Caco-2 (cell line): ENCODE measurements at regions of chr5 and their contacts with region 1.

Region 1: DNA sequence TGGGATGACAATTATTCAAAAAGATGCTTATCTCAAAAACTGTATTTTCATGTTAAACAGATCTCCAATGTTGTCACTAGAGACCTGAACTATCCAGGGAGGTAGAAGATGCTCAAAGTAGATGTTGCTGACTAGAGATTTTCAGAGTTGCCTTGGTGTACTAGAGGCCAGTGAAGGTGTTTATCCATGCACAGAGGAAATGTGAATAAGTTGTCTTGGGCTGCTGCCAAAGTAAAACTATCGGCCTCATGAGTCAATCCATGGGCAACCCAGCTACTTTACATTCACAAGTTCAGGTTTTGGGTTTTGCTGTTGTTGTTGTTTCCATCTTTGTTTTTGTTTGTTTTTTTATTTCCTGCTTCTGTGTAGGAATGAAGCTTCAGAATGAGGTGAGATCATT is 141.1 kb upstream of the RANBP3L start:
- DNase-seq: no peak
- H3K4me3 ChIP-seq: no peak overlapping the region
- H3K4me3 Mint-ChIP-seq: peak overlapping the region; percentile 10
- H3K27ac Mint-ChIP-seq: peak overlapping the region; percentile 75
- H3K4me1 ChIP-seq: peaks cover 54% of the 10 kb centered on the region
- H3K4me1 Mint-ChIP-seq: peaks cover 36% of the 10 kb centered on the region
- H3K27me3 ChIP-seq: no peaks in the 10 kb centered on the region
- H3K27me3 Mint-ChIP-seq: no peaks in the 10 kb centered on the region
- CTCF ChIP-seq: no peak

Region 2: DNA sequence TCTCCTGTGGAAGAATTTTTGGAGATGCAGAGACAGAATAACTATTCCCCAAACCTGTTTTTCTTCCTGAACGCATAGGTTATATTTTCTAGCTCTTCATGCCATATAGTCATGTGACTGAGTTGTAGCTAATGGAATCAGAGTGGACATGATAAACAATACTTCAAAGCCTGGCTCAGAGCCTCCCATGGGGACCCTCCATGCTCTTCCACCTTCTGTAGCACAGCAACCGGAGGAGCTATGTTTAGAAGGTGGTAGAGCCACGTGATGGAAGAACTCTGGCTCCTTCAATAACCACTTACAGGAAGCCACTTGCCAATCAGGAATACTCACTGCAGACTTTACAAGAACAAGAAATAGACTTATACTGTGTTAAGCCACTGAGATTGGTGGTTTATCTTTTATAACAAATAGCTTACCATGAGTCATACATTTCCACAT is 240.3 kb before region 1 on chr5:
- CTCF ChIA-PET with region 1: no interaction called
- POLR2A ChIA-PET with region 1: no interaction called
- intact Hi-C with region 1: no loop called
- DNase-seq: no peak
- H3K4me3 ChIP-seq: no peak overlapping the region
- H3K4me3 Mint-ChIP-seq: no peak overlapping the region
- H3K27ac Mint-ChIP-seq: no peak overlapping the region
- H3K4me1 ChIP-seq: no peaks in the 10 kb centered on the region
- H3K4me1 Mint-ChIP-seq: no peaks in the 10 kb centered on the region
- H3K27me3 ChIP-seq: no peaks in the 10 kb centered on the region
- H3K27me3 Mint-ChIP-seq: no peaks in the 10 kb centered on the region
- CTCF ChIP-seq: no peak

Region 3: DNA sequence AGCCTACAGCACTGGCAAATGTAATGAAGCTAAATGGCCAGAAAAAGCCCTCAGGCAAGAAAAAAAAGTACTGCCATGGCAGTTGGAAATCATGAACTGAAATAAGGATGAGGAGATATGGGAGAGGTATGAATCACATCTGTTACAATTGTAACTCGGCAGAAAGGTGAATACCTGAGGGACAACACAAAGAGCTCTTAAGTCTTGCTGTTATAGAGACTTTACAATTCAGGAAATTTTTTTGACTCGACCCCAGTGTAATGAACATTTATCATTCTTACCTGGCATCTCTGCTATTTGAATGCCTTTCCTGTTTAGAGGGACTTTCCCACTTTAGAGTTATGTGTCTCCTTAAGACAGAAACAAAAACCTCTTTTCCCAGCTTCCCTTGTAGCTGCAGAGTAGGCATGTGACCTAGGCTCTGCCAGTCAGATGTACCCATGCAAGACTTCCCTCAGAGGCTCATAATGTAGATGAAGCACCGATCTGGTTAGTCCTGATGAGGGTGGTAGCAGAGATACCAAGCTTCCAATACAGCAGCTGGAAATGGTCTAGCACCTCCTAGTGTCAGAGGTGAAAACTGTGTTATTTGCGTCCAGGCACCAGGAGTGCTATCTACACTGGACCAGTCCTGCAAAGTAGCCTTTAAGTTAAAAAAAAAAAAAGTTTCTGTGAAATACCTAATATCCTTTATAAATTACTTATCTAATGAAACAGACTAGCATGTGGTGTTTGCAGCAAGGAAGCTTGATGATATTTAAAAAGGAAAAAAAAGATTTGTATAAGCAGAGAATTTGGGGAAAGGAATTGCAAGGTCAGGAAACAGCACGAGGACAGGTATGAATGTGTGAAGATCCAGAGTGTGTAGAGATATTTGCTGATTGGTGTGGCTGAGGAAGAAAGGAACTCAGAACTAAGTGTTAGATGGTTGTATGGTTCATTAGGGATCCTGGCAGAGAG is 16.7 kb after region 1 on chr5:
- CTCF ChIA-PET with region 1: no interaction called
- POLR2A ChIA-PET with region 1: no interaction called
- intact Hi-C with region 1: loop called (anchors 1 kb)
- DNase-seq: no peak
- H3K4me3 ChIP-seq: no peak overlapping the region
- H3K4me3 Mint-ChIP-seq: no peak overlapping the region
- H3K27ac Mint-ChIP-seq: peak overlapping the region; percentile 65
- H3K4me1 ChIP-seq: peaks cover 38% of the 10 kb centered on the region
- H3K4me1 Mint-ChIP-seq: peaks cover 38% of the 10 kb centered on the region
- H3K27me3 ChIP-seq: no peaks in the 10 kb centered on the region
- H3K27me3 Mint-ChIP-seq: no peaks in the 10 kb centered on the region
- CTCF ChIP-seq: peak; percentile 1 to 38

Region 4: GRCh38 chr5:36695677-36696673 is 253.2 kb after region 1 on chr5:
- CTCF ChIA-PET with region 1: no interaction called
- POLR2A ChIA-PET with region 1: no interaction called
- intact Hi-C with region 1: no loop called
- DNase-seq: peak; percentile 71 to 76
- H3K4me3 ChIP-seq: no peak overlapping the region
- H3K4me3 Mint-ChIP-seq: no peak overlapping the region
- H3K27ac Mint-ChIP-seq: no peak overlapping the region
- H3K4me1 ChIP-seq: peaks cover 24% of the 10 kb centered on the region
- H3K4me1 Mint-ChIP-seq: peaks cover 41% of the 10 kb centered on the region
- H3K27me3 ChIP-seq: no peaks in the 10 kb centered on the region
- H3K27me3 Mint-ChIP-seq: no peaks in the 10 kb centered on the region
- CTCF ChIP-seq: peak; percentile 84 to 92

Region 5: DNA sequence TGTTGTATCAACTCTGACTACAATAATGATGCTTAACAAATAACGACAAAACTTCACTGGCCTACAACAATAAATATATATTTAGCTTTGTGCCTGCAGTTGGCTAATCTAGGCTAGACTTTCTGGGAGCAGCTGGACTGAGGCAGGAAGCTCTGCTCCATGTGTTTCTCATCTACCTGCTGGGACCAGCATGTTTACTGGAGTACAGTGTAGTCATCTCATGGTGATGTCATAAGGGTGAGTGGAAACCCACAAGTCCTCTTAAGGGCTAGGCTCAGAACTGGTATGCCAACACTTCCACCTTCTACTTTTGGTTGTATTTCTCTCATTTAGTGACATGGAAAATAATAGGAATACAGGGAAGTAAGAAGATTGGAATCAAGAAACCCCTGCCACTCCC is 348.0 kb after region 1 on chr5:
- CTCF ChIA-PET with region 1: no interaction called
- POLR2A ChIA-PET with region 1: no interaction called
- intact Hi-C with region 1: no loop called
- DNase-seq: no peak
- H3K4me3 ChIP-seq: no peak overlapping the region
- H3K4me3 Mint-ChIP-seq: no peak overlapping the region
- H3K27ac Mint-ChIP-seq: no peak overlapping the region
- H3K4me1 ChIP-seq: peaks cover 14% of the 10 kb centered on the region; the same call in 1 of the 2 replicates
- H3K4me1 Mint-ChIP-seq: peaks cover 21% of the 10 kb centered on the region
- H3K27me3 ChIP-seq: no peaks in the 10 kb centered on the region
- H3K27me3 Mint-ChIP-seq: peaks cover 11% of the 10 kb centered on the region
- CTCF ChIP-seq: no peak